Left cardiac atrium (tissue), 4 donors: ENCODE measurements at regions of chr19 and their contacts with region 1.

Region 1: GRCh38 chr19:38134540-38135149 is 89.4 kb downstream of the DPF1 start:
- DNase-seq: peak; percentile 37
- ATAC-seq: peak in 1 of 2 donors; percentile 21

Region 2: DNA sequence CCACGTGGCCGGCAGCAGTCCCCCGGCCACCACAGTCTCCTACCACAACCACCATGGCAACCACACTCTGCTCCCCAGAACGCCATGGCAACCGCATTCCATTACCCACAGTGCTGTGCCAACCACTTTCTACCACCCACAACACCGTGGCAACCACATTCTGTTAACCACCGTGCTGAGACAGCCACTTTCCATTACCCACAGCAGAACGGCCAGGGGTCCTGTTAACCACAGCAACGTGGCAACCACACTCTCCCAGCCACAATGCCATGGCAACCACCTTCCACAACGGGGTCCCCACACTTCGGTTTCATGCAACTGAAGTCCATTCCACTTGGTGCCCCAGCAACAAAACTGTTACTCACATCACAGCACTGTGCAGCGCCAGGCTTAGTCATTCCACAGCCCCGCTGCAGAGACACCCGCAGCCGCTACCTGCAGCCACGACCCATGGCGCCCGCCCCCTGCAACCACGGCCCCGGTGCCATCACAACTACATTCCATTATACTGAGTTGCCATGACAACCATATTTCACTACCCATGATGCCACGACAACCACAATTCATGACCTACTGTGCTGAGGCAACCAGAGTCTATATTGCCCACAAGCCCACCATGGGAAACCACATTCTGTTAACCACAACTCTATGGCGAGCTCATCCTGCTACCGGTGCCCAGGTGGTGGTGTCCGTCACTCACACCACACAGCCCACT is 79.4 kb after region 1 on chr19:
- intact Hi-C with region 1: loop called in 1 of 2 experiments (anchors 10 kb)
- DNase-seq: no peak
- ATAC-seq: no peak